ENCODE measurements at regions of chr11 and their contacts with region 1.

Region 1: GRCh38 chr11:121655537-121656327 is 203.0 kb upstream of the SORL1-AS1 start:
- DNase-seq: peak; percentile 73 to 93 (median 85)
- ATAC-seq: peak; percentile 94 to 98 (median 96)
- H3K4me3 ChIP-seq: peak overlapping the region; percentile 11 to 45 (median 29)
- H3K27ac ChIP-seq: peak overlapping the region; percentile 58 to 90 (median 78)
- H3K4me1 ChIP-seq: peaks cover 0 to 7% (median 0%) of the 10 kb centered on the region in 3 donors
- H3K27me3 ChIP-seq: no peaks in the 10 kb centered on the region
- CTCF ChIP-seq: peak; percentile 58 to 92 (median 84)

Region 2: GRCh38 chr11:122085264-122085663 is 429.5 kb after region 1 on chr11:
- intact Hi-C with region 1: no loop called
- DNase-seq: no peak
- ATAC-seq: peak in 1 of 4 donors; percentile 27
- H3K4me3 ChIP-seq: no peak overlapping the region
- H3K27ac ChIP-seq: no peak overlapping the region
- H3K4me1 ChIP-seq: no peaks in the 10 kb centered on the region
- H3K27me3 ChIP-seq: no peaks in the 10 kb centered on the region
- CTCF ChIP-seq: no peak

Region 3: DNA sequence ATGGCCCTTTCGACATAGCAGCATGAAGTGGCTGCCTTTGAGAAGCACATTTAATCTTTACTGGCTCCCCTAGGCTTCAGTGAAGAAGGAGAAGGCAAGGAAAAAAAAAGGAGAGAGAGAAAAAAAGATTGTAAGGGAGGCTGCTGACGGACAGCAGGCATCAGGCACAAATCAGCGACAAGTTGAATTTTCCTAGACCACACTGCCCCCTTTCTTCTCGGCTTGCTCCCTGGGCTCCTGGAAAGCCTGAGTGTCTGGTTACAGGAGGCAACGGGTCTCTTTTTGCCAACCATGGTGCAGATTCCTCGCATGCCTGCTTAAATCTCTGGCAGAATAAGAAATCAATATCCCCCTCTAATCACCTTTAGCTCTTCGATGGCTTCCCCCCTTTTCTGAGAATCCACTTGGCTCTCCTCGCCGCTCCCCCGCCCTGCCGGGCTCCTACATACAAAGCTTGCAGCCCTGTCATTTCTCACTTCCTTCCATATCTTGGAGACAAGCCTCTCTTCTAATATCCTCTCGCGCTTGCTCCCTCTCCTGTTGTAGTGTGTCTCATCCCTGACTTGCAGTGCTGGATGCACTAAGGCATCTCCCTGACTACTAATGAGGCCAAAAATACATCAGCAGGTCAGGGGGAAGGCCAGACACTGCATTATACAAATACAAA is 446.0 kb after region 1 on chr11:
- intact Hi-C with region 1: loop called in 2 of 3 experiments (anchors 5 to 10 kb)
- DNase-seq: peak; percentile 22 to 55 (median 42)
- ATAC-seq: peak; percentile 76 to 87 (median 83)
- H3K4me3 ChIP-seq: peak overlapping the region in 3 of 4 donors; percentile 7 to 42 (median 33)
- H3K27ac ChIP-seq: peak overlapping the region; percentile 35 to 83 (median 62)
- H3K4me1 ChIP-seq: no peaks in the 10 kb centered on the region
- H3K27me3 ChIP-seq: peaks cover 0 to 6% (median 3%) of the 10 kb centered on the region in 4 donors
- CTCF ChIP-seq: peak in 2 of 4 donors; percentile 13 to 33

Region 4: DNA sequence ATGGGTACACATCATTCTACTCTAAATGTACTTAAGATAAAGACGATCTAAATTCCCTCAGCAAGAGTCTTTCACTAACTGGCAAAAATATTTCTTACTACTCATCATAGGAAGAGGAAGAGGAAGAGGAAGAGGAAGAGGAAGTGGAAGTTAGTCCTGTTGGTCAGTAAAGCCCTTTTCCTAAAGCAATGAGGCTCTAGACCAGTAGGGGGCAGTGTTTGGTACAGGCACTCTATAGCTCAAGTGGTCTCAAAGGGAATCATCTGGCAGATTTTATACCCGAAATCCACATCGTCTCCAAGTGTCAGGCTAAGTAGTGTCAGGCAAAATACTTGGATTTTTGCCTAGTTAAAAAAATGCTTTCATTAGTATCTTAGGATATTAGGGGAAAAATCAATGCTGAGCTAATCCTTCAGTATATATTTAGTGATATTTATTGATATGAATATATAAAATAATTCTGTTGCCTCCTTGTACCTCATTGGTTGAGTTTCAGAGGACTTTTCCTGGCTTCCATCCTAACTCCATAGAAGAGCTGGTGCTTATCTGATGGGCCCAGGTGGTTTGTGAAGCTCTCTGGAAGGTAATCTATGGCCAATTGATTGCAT is 452.6 kb after region 1 on chr11:
- intact Hi-C with region 1: loop called in 2 of 3 experiments (anchors 5 to 10 kb)
- DNase-seq: peak in 1 of 6 donors; percentile 22
- ATAC-seq: peak in 2 of 4 donors; percentile 42 to 57
- H3K4me3 ChIP-seq: no peak overlapping the region
- H3K27ac ChIP-seq: no peak overlapping the region
- H3K4me1 ChIP-seq: no peaks in the 10 kb centered on the region
- H3K27me3 ChIP-seq: no peaks in the 10 kb centered on the region
- CTCF ChIP-seq: peak in 3 of 4 donors; percentile 31 to 42 (median 41)

Region 5: GRCh38 chr11:122202951-122203456 is 547.3 kb after region 1 on chr11:
- intact Hi-C with region 1: loop called in 2 of 3 experiments (anchors 5 to 10 kb)
- DNase-seq: peak; percentile 30 to 88 (median 69)
- ATAC-seq: peak; percentile 86 to 96 (median 94)
- H3K4me3 ChIP-seq: no peak overlapping the region
- H3K27ac ChIP-seq: no peak overlapping the region
- H3K4me1 ChIP-seq: peaks cover 0 to 10% (median 5%) of the 10 kb centered on the region in 3 donors
- H3K27me3 ChIP-seq: no peaks in the 10 kb centered on the region
- CTCF ChIP-seq: peak; percentile 90 to 95 (median 93)

Region 6: GRCh38 chr11:122505304-122506006 is 849.7 kb after region 1 on chr11:
- intact Hi-C with region 1: loop called in 2 of 3 experiments (anchors 10 kb)
- DNase-seq: peak; percentile 64 to 87 (median 78)
- ATAC-seq: peak; percentile 95 to 100 (median 100)
- H3K4me3 ChIP-seq: no peak overlapping the region
- H3K27ac ChIP-seq: no peak overlapping the region
- H3K4me1 ChIP-seq: no peaks in the 10 kb centered on the region
- H3K27me3 ChIP-seq: no peaks in the 10 kb centered on the region
- CTCF ChIP-seq: peak; percentile 56 to 81 (median 74)

Measured in pancreas (tissue), 10 donors.